Activated T-helper 1 cell treated with anti-CD3 and anti-CD28 coated beads, Interleukin-12 subunit alpha, Interleukin-12 subunit beta, Interleukin-2, Interleukin-4 antibody, amounts not matched to agents 30 ng/mL and 10 ng/mL and 1 ng/mL, durations not matched to agents 14 hours and 24 hours and 36 hours (primary cell): ENCODE measurements at regions of chr5 and their contacts with region 1.

Region 1: DNA sequence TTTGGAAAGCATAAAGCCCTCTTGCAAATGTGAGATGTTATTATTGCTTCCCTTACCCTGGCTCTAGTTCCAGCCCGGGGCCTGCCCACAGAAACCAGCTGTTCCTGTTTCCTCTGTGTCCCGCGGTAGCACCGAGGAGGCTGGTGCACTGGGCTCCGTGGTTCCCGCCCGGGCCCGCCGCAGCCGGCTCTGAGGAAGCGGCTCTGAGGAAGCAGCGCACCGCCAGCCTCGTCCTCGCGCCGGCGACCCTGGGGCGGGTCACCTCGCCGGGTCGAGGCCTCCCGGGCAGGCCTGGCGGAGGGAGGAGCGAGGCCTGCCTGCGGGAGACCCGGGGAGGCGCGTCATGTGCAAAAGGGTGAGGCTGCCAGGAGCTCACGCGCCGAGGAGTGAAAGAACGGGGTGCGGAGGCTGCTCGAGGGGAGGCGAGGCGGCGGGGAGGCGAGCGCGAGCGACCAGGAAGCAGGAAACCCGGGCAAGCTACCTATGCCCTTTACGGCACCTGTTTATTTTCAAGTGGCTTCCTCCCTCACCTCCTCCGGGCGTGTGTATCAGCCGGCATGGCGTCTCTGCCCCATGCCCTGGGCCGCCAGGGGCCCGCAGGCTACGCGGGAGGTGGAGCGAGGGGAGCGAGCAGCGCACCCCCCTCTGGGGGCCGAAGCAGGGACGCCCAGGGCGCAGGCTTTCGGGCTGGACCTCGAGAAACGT is 61.3 kb upstream of the MEGF10 start:
- DNase-seq: peak; percentile 34
- H3K4me3 Mint-ChIP-seq: peak overlapping the region; percentile 38
- H3K27ac Mint-ChIP-seq: no peak overlapping the region
- H3K4me1 Mint-ChIP-seq: peaks cover 5% of the 10 kb centered on the region
- H3K27me3 Mint-ChIP-seq: peaks cover 1% of the 10 kb centered on the region

Region 2: DNA sequence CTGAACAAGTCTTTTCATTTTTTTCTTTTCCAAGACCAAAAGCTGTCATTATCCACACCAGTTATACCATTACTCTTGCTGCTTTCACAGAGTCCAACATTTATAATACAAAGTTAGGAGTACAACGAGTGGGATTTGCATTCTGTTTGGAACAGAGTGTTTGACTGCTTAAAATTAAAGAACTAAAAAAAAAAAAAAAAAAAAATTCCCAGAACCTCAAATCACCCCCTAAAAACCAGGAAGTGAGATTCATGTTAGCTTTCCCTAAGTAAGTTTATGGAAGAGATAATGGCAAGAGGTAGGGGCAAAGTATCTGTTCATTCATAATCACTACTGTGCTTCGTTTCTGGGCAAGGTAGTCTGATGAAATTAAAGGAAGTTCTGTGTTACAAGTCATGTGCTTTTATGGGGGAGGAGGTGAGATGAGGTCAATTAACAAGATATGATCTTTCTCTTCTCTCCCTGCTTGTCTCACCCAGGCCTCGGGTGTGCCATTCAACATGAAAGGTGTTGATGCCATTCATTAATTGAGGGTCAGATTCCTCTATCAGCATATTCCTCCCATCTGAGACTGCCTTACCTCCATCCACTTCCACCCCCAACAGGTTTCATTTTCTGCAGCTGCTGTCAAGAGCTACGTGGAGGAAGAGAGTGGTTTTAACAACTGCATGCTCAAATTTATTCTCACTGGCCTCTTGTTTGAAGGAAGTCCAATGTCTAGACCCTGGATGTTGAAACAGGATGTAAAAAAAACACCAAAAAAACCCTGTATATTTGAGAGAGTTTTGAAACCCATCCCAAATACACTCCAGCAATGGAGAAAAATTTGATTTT is 257.1 kb before region 1 on chr5:
- intact Hi-C with region 1: loop called (anchors 5 kb)
- DNase-seq: peak; percentile 31
- H3K4me3 Mint-ChIP-seq: peak overlapping the region; percentile 58
- H3K27ac Mint-ChIP-seq: peak overlapping the region; percentile 90
- H3K4me1 Mint-ChIP-seq: peaks cover 47% of the 10 kb centered on the region
- H3K27me3 Mint-ChIP-seq: no peaks in the 10 kb centered on the region

Region 3: GRCh38 chr5:127186657-127187056 is 42.7 kb before region 1 on chr5:
- intact Hi-C with region 1: no loop called
- DNase-seq: no peak
- H3K4me3 Mint-ChIP-seq: no peak overlapping the region
- H3K27ac Mint-ChIP-seq: no peak overlapping the region
- H3K4me1 Mint-ChIP-seq: no peaks in the 10 kb centered on the region
- H3K27me3 Mint-ChIP-seq: peaks cover 6% of the 10 kb centered on the region

Region 4: GRCh38 chr5:127400946-127401670 is 171.8 kb after region 1 on chr5:
- intact Hi-C with region 1: no loop called
- DNase-seq: no peak
- H3K4me3 Mint-ChIP-seq: no peak overlapping the region
- H3K27ac Mint-ChIP-seq: no peak overlapping the region
- H3K4me1 Mint-ChIP-seq: no peaks in the 10 kb centered on the region
- H3K27me3 Mint-ChIP-seq: peaks cover 19% of the 10 kb centered on the region